Activated T-helper 2 cell treated with anti-CD3 and anti-CD28 coated beads, Interferon-gamma antibody, Interleukin-2, Interleukin-4, amounts not matched to agents 10 μg/mL and 5 μg/mL and 100 μg/mL, durations not matched to agents 14 hours and 24 hours and 36 hours (primary cell): ENCODE measurements at regions of chr11 and their contacts with region 1.

Region 1: DNA sequence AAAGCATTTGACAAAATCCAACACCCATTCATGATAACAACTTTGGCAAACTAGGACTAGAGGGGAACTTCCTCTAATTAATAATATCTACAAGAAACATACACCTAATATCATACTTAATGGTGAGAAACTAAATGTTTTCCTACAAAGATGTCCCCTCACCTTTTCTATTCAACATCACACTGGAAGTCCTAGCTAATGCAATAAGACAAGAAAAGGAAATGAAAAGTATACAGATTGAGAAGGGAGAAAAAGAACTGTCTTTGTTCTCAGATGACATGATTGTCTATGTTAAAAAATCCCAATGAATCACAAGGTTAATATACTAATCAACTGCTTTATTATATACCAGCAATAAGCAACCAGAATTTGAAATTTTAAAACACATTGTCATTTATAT is 52.4 kb downstream of the C11orf65 start:
- DNase-seq: no peak
- H3K4me3 Mint-ChIP-seq: no peak overlapping the region
- H3K27ac Mint-ChIP-seq: no peak overlapping the region
- H3K4me1 Mint-ChIP-seq: no peaks in the 10 kb centered on the region
- H3K27me3 Mint-ChIP-seq: no peaks in the 10 kb centered on the region

Region 2: GRCh38 chr11:108431997-108432396 is 17.0 kb after region 1 on chr11:
- intact Hi-C with region 1: no loop called
- DNase-seq: no peak
- H3K4me3 Mint-ChIP-seq: no peak overlapping the region
- H3K27ac Mint-ChIP-seq: no peak overlapping the region
- H3K4me1 Mint-ChIP-seq: no peaks in the 10 kb centered on the region
- H3K27me3 Mint-ChIP-seq: no peaks in the 10 kb centered on the region

Region 3: GRCh38 chr11:108647701-108648527 is 233.0 kb after region 1 on chr11:
- intact Hi-C with region 1: loop called (anchors 1 kb)
- DNase-seq: peak; percentile 39
- H3K4me3 Mint-ChIP-seq: no peak overlapping the region
- H3K27ac Mint-ChIP-seq: no peak overlapping the region
- H3K4me1 Mint-ChIP-seq: no peaks in the 10 kb centered on the region
- H3K27me3 Mint-ChIP-seq: peaks cover 7% of the 10 kb centered on the region

Region 4: GRCh38 chr11:109026891-109027489 is 612.0 kb after region 1 on chr11:
- intact Hi-C with region 1: no loop called
- DNase-seq: no peak
- H3K4me3 Mint-ChIP-seq: no peak overlapping the region
- H3K27ac Mint-ChIP-seq: no peak overlapping the region
- H3K4me1 Mint-ChIP-seq: no peaks in the 10 kb centered on the region
- H3K27me3 Mint-ChIP-seq: no peaks in the 10 kb centered on the region

Region 5: DNA sequence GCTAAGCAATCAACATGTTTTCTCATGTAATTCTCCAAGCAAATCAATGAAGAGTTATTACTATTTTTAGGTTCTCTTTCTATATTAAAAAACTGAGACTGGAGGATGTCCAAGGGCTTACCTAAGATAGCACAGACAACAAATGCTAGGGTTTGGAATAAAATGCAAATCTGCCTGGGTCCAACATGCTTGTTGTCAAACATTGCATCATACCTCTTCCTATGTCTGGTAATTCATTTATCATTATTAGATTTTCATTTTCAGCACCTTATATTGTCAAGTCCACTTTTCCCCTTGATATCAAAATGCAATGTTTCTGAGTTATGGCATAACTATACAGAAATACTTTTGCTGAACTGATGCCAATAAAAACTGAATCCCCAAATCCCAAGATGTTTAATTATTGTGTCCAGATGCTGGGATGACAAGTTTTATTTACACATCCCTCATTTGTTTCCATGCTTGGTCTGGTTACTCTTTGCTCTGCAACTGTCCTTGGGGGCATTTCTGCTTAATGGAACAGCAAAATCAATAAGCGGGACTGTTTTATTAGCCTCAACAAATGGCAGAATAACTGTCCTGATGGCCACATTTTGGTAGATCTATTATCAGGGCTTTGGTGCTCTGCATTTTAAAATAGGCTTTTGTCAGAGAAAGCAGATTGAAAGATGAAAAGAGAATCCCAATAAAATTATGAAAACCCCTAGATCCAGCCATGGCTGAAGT is 1093.0 kb after region 1 on chr11:
- intact Hi-C with region 1: no loop called
- DNase-seq: no peak
- H3K4me3 Mint-ChIP-seq: no peak overlapping the region
- H3K27ac Mint-ChIP-seq: no peak overlapping the region
- H3K4me1 Mint-ChIP-seq: no peaks in the 10 kb centered on the region
- H3K27me3 Mint-ChIP-seq: no peaks in the 10 kb centered on the region